ENCODE measurements at regions of chr2 and their contacts with region 1.

Region 1: DNA sequence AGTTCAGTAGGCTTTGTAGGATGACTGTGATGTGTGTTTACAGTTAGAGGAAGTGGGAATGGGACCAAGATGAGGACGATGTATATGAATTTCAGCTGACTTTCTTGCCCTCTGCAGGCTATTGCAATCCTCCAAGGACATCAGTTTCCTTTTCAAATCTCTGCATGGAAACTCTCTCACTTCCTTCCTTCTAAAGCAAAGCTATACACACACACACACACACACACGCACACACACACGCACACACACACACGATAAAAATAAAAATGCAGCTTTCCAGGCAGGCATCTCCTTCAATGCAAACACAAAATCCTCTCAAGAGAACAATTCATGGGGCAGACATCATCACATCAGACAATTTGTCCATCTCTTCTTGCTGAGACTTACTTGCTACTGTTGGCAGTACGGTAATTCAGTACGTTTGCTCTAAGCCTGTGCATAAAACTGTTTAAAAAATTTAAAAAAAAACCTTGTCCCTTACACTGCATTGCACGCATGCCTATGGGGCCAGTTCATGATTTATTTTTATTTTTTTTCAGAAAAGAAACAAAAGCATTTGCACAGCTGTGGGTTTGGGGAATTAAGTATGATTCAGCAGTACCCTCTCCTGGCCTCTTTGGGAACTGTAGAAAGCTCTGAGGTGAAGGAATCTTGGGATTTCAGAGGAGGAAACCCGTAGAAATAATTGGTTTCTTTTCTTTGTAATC is 27.1 kb upstream of the ICOS start:
- DNase-seq: peak in 4 of 5 donors; percentile 42 to 51 (median 48)
- H3K4me3 ChIP-seq: no peak overlapping the region
- H3K4me3 Mint-ChIP-seq: peak overlapping the region; percentile 9 to 80 (median 69)
- H3K27ac ChIP-seq: no peak overlapping the region
- H3K27ac Mint-ChIP-seq: peak overlapping the region in 3 of 7 donors; percentile 49 to 93 (median 68)
- H3K4me1 ChIP-seq: peaks cover 18% of the 10 kb centered on the region
- H3K4me1 Mint-ChIP-seq: peaks cover 6 to 25% (median 15%) of the 10 kb centered on the region in 4 donors
- H3K27me3 ChIP-seq: no peaks in the 10 kb centered on the region
- H3K27me3 Mint-ChIP-seq: no peaks in the 10 kb centered on the region

Region 2: DNA sequence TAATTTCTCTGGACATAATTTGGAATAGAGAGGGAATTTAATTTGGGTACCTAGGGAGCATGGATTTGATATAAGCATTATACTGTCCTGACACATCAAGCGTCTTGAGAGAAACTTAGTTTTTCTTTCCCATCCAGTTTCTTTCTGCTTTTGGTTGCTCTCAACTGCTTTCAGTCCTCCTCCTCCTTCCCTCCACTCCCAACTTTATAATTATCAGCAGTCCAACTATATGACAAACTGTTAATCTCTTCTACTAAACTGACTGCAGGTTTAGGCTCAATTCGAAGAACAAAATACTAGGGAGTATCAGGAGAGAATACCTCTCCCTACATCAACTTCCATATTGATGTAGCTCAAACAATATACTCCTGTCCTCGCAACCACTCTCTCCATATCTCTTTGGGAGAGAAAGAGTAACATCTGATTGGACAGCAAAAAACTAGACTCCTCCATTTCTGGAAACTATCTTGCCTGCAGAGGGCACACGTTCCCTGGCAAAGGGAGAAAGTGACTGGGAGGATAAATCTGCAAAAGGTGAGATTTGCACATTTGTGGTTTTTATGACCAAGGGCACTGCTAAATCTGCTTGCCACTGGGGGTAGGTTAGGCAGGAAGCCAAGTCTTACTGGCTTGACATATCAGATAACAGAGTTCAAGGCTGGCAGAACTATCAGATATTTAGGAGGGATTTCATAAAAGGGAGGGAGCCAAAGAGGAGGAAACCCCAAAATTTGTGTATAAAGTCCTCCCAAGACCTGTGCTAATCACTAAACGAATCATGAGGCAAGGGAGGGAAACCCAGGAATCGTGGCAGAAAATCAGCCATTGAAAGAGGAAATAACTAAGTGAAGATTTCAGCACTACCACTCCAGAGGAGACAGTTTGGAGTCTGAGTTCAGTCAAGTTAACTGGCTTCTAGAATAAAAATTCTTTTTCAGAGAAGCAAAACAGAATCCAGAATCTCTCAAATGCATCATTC is 1077.9 kb before region 1 on chr2:
- CTCF ChIA-PET with region 1: no interaction called
- POLR2A ChIA-PET with region 1: no interaction called
- intact Hi-C with region 1: loop called (anchors 10 kb)
- DNase-seq: peak; percentile 46 to 54 (median 48)
- H3K4me3 ChIP-seq: no peak overlapping the region
- H3K4me3 Mint-ChIP-seq: peak overlapping the region in 4 of 8 donors; percentile 30 to 71 (median 38)
- H3K27ac ChIP-seq: no peak overlapping the region
- H3K27ac Mint-ChIP-seq: peak overlapping the region in 5 of 7 donors; percentile 26 to 91 (median 42)
- H3K4me1 ChIP-seq: peaks cover 9% of the 10 kb centered on the region
- H3K4me1 Mint-ChIP-seq: peaks cover 9 to 11% (median 9%) of the 10 kb centered on the region in 4 donors
- H3K27me3 ChIP-seq: no peaks in the 10 kb centered on the region
- H3K27me3 Mint-ChIP-seq: no peaks in the 10 kb centered on the region

Region 3: GRCh38 chr2:203484266-203485112 is 424.9 kb before region 1 on chr2:
- CTCF ChIA-PET with region 1: interaction called, 17 read pairs
- POLR2A ChIA-PET with region 1: interaction called, 10 read pairs
- intact Hi-C with region 1: loop called (anchors 1 kb)
- DNase-seq: peak; percentile 52 to 62 (median 55)
- H3K4me3 ChIP-seq: no peak overlapping the region
- H3K4me3 Mint-ChIP-seq: no peak overlapping the region
- H3K27ac ChIP-seq: no peak overlapping the region
- H3K27ac Mint-ChIP-seq: peak overlapping the region in 4 of 7 donors; percentile 20 to 84 (median 48)
- H3K4me1 ChIP-seq: peaks cover 7% of the 10 kb centered on the region
- H3K4me1 Mint-ChIP-seq: peaks cover 4 to 6% (median 5%) of the 10 kb centered on the region in 4 donors
- H3K27me3 ChIP-seq: no peaks in the 10 kb centered on the region
- H3K27me3 Mint-ChIP-seq: no peaks in the 10 kb centered on the region

Region 4: GRCh38 chr2:203858176-203858575 is 51.2 kb before region 1 on chr2:
- CTCF ChIA-PET with region 1: interaction called, 41 read pairs
- POLR2A ChIA-PET with region 1: interaction called, 12 read pairs
- intact Hi-C with region 1: loop called (anchors 1 kb)
- DNase-seq: peak in 1 of 5 donors; percentile 38
- H3K4me3 ChIP-seq: no peak overlapping the region
- H3K4me3 Mint-ChIP-seq: peak overlapping the region in 4 of 8 donors; percentile 2 to 47 (median 22)
- H3K27ac ChIP-seq: no peak overlapping the region
- H3K27ac Mint-ChIP-seq: peak overlapping the region in 5 of 7 donors; percentile 6 to 57 (median 36)
- H3K4me1 ChIP-seq: peaks cover 71% of the 10 kb centered on the region
- H3K4me1 Mint-ChIP-seq: peaks cover 49 to 75% (median 52%) of the 10 kb centered on the region in 4 donors
- H3K27me3 ChIP-seq: no peaks in the 10 kb centered on the region
- H3K27me3 Mint-ChIP-seq: no peaks in the 10 kb centered on the region

Region 5: GRCh38 chr2:203897544-203897943 is 11.9 kb before region 1 on chr2:
- CTCF ChIA-PET with region 1: interaction called, 19 read pairs
- POLR2A ChIA-PET with region 1: interaction called, 5 read pairs
- intact Hi-C with region 1: no loop called
- DNase-seq: no peak
- H3K4me3 ChIP-seq: no peak overlapping the region
- H3K4me3 Mint-ChIP-seq: no peak overlapping the region
- H3K27ac ChIP-seq: no peak overlapping the region
- H3K27ac Mint-ChIP-seq: peak overlapping the region in 1 of 7 donors; percentile 6
- H3K4me1 ChIP-seq: no peaks in the 10 kb centered on the region
- H3K4me1 Mint-ChIP-seq: peaks cover 4 to 13% (median 7%) of the 10 kb centered on the region in 4 donors
- H3K27me3 ChIP-seq: no peaks in the 10 kb centered on the region
- H3K27me3 Mint-ChIP-seq: peaks cover 0 to 1% of the 10 kb centered on the region in 2 donors